HepG2 (cell line): ENCODE measurements at regions of chr13 and their contacts with region 1.

Region 1: DNA sequence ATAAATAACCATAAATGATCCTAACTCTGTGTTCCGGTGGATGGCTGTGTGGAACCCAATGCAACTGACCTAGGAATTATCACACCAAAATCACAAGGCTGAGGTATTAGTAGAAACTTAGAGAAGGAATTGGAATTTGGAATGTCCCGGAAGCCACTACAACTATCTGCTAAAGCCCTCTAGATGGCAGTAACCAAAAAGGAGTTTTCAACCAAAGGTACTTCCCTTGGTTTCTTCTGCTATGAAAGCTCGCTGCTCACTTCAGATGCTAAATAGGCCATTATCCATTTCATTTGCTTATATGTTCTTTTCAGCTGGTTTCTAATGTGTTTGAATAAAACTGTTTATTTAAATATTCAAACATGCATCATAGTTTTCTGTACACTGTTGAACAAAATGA is 1589.1 kb upstream of the SPRY2 start:
- DNase-seq: peak; percentile 14
- ATAC-seq: peak; percentile 80
- H3K4me3 ChIP-seq: no peak overlapping the region
- H3K27ac ChIP-seq: no peak overlapping the region
- H3K4me1 ChIP-seq: no peaks in the 10 kb centered on the region
- H3K27me3 ChIP-seq: no peaks in the 10 kb centered on the region
- CTCF ChIP-seq: peak; percentile 44
- EP300 ChIP-seq: no peak
- POLR2A ChIP-seq: no peak
- RAD21 ChIP-seq: no peak

Region 2: DNA sequence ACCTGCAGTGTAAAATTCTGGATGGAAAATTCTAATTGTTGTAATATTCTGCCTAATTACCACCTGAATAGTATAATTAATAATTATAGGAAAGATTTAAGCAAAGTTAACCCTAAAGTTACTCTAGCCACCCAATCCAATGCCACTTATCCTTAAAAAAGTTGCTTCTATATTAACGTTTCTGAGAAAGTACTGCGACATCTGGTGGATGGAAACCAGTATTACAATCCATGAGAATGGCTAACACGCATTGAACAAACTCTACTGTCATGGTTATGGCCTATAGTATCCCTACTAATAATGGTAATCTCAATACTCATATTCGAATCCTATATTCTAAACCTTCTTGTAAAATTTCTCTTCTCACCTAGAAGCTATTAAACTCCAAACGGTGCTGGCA is 400.5 kb after region 1 on chr13:
- CTCF ChIA-PET with region 1: no interaction called
- POLR2A ChIA-PET with region 1: no interaction called
- in situ Hi-C with region 1: loop called (anchors 25 kb)
- intact Hi-C with region 1: loop called (anchors 1 kb)
- DNase-seq: peak; percentile 29
- ATAC-seq: peak; percentile 52; the same call in 2 of the 3 replicates
- H3K4me3 ChIP-seq: no peak overlapping the region
- H3K27ac ChIP-seq: no peak overlapping the region
- H3K4me1 ChIP-seq: no peaks in the 10 kb centered on the region
- H3K27me3 ChIP-seq: no peaks in the 10 kb centered on the region
- CTCF ChIP-seq: peak; percentile 52
- EP300 ChIP-seq: no peak
- POLR2A ChIP-seq: no peak
- RAD21 ChIP-seq: no peak